ENCODE measurements at regions of chr6 and their contacts with region 1.

Region 1: GRCh38 chr6:111873178-111874024 is at the start of gene FYN:
- DNase-seq: peak; percentile 99
- H3K4me3 Mint-ChIP-seq: peak within 1 kb of the TSS; percentile 98
- H3K27ac Mint-ChIP-seq: peak within 1 kb of the TSS; percentile 96
- H3K4me1 Mint-ChIP-seq: peaks cover 30% of the 10 kb centered on the region
- H3K27me3 Mint-ChIP-seq: no peaks in the 10 kb centered on the region
- total RNA-seq, gene FYN: 353 to 365 TPM

Region 2: DNA sequence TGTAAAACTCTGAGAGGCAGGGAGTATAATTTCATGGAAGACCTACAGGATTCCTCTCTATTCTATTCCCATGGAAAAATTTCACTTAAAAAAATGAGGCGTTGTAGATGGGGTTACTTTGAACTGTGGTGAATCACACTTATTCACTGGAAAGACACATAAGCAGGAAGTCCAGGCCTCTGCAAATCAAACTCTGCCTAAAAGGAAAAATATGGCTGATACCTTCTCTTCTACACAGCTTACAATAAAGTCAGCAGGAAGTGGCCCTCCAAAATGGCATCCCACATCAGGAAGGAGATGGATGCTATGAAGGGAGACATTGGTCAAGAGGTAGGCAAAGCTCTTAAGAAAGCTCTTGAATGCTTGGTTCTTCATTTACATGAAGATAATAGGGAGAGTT is 116.1 kb before region 1 on chr6:
- CTCF ChIA-PET with region 1: interaction called, 4 read pairs
- POLR2A ChIA-PET with region 1: interaction called, 27 read pairs
- intact Hi-C with region 1: loop called (anchors 1 kb)
- DNase-seq: peak; percentile 53
- H3K4me3 Mint-ChIP-seq: peak overlapping the region; percentile 84
- H3K27ac Mint-ChIP-seq: peak overlapping the region; percentile 95
- H3K4me1 Mint-ChIP-seq: peaks cover 86% of the 10 kb centered on the region
- H3K27me3 Mint-ChIP-seq: no peaks in the 10 kb centered on the region

Region 3: DNA sequence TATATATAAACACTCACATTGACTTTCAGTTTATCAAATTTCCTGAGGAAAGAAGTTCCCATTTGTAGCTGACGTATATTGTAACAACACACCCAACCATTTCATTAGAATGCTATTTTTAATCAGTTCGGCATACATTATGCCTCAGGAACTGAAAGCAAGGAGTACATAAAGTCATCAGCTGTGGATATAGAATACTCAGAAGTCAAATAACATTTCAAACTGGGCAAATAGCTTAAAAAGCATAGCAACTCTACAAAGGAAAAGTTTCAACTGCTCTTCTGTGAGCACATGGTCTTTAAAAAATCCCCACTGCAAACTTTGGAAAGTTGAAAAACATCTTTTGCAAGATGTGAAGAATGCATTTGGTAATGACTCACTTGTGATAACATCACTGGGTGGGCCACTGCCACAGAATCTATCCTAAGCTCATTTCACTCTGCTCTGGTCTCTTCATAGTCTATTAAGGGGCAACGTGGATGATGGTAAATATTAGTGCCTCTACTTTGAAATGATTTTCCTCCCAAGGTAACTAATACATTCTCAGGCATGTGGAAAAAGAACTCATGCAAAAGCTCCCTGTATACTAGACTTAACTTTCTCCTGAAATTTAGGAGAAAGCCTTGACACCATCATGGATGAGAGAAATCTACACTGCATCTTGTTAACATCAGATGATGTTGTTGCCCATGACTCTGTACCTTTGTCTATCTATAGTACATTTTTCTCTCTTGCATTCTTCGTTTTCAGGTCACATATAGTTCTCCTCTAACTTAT is 49.4 kb before region 1 on chr6:
- CTCF ChIA-PET with region 1: interaction called, 5 read pairs
- POLR2A ChIA-PET with region 1: interaction called, 12 read pairs
- intact Hi-C with region 1: loop called (anchors 1 kb)
- DNase-seq: peak; percentile 44
- H3K4me3 Mint-ChIP-seq: peak overlapping the region; percentile 21
- H3K27ac Mint-ChIP-seq: peak overlapping the region; percentile 91
- H3K4me1 Mint-ChIP-seq: peaks cover 80% of the 10 kb centered on the region
- H3K27me3 Mint-ChIP-seq: no peaks in the 10 kb centered on the region

Region 4: GRCh38 chr6:111845441-111845871 is 27.9 kb before region 1 on chr6:
- CTCF ChIA-PET with region 1: interaction called, 11 read pairs
- POLR2A ChIA-PET with region 1: interaction called, 26 read pairs
- intact Hi-C with region 1: loop called (anchors 1 kb)
- DNase-seq: peak; percentile 56
- H3K4me3 Mint-ChIP-seq: peak overlapping the region; percentile 14
- H3K27ac Mint-ChIP-seq: peak overlapping the region; percentile 86
- H3K4me1 Mint-ChIP-seq: peaks cover 62% of the 10 kb centered on the region
- H3K27me3 Mint-ChIP-seq: no peaks in the 10 kb centered on the region

Region 5: GRCh38 chr6:111888928-111889695 is 15.7 kb after region 1 on chr6:
- CTCF ChIA-PET with region 1: no interaction called
- POLR2A ChIA-PET with region 1: no interaction called
- intact Hi-C with region 1: no loop called
- DNase-seq: no peak
- H3K4me3 Mint-ChIP-seq: no peak overlapping the region
- H3K27ac Mint-ChIP-seq: no peak overlapping the region
- H3K4me1 Mint-ChIP-seq: no peaks in the 10 kb centered on the region
- H3K27me3 Mint-ChIP-seq: no peaks in the 10 kb centered on the region

Region 6: DNA sequence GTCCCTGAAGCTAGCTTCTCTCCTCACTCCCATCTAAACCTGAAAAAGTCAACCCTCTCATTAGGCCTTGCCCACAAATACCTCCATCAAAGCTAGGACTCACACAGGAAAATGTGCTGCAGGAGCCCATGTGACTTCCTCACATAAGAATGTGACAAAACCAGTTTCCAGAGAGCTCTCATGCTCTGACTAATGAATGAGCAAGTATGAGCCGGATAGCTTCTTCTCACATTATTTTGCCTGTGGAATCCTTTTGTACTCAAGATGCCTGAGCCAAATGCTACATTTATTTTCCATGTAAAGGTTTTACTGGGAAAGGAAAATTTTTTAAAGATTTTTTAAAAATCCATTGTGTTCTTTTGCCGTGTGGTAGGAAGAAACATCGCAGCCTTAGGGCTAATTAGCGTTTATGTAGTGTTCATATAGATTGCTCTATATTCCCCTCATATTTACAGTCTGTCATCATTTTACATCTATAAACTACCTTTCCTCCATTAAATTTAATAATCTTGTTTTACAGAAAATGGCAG is 111.9 kb after region 1 on chr6:
- CTCF ChIA-PET with region 1: interaction called, 3 read pairs
- POLR2A ChIA-PET with region 1: interaction called, 3 read pairs
- intact Hi-C with region 1: loop called (anchors 2 kb)
- DNase-seq: peak; percentile 63
- H3K4me3 Mint-ChIP-seq: no peak overlapping the region
- H3K27ac Mint-ChIP-seq: peak overlapping the region; percentile 92
- H3K4me1 Mint-ChIP-seq: peaks cover 74% of the 10 kb centered on the region
- H3K27me3 Mint-ChIP-seq: no peaks in the 10 kb centered on the region

Region 7: GRCh38 chr6:112149719-112150263 is 276.4 kb after region 1 on chr6:
- CTCF ChIA-PET with region 1: no interaction called
- POLR2A ChIA-PET with region 1: no interaction called
- intact Hi-C with region 1: no loop called
- DNase-seq: no peak
- H3K4me3 Mint-ChIP-seq: no peak overlapping the region
- H3K27ac Mint-ChIP-seq: no peak overlapping the region
- H3K4me1 Mint-ChIP-seq: peaks cover 16% of the 10 kb centered on the region
- H3K27me3 Mint-ChIP-seq: peaks cover 11% of the 10 kb centered on the region

Measured in activated CD4-positive, alpha-beta memory T cell treated with anti-CD3 and anti-CD28 coated beads for 36 hours (primary cell).